ENCODE measurements at regions of chr19 and their contacts with region 1.

Region 1: GRCh38 chr19:57240311-57241090 is at the start of gene ZNF805:
- DNase-seq: peak; percentile 94
- H3K4me3 ChIP-seq: peak within 1 kb of the TSS; percentile 61 to 79
- H3K27ac ChIP-seq: peak within 1 kb of the TSS; percentile 81 to 84
- H3K4me1 ChIP-seq: no peaks in the 10 kb centered on the region
- H3K27me3 ChIP-seq: no peaks in the 10 kb centered on the region
- CTCF ChIP-seq: peak in 3 of 4 experiments; percentile 20 to 41 (median 29)
- POLR2A ChIP-seq: peak; percentile 53
- total RNA-seq, gene ZNF805: 16.4 to 21.1 TPM

Region 2: DNA sequence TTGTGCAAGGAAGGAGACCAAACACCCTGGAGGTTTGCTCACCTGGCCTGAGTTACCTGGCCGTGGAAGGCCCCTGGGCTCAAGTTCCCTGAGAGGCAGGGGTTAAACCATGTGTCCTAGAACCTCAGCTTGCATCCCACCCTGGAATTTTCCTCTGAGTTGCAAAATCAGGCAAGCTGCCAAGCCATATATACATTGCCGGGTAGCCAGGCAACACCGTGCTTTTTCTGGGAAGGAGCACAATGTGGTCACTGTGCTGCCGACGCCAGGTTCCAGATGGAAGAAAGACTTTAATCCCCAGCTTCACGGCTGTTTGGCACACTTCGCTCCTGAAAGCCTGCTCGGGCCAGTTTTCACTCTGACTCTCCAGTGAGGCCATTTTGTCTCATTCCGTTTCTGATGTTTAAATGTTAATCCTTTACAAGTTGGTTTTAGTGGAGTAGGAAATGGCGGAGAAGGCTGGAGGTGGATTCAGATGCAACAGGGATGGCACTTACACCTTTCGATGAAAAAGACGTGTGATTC is 339.9 kb before region 1 on chr19:
- intact Hi-C with region 1: no loop called
- DNase-seq: no peak
- H3K4me3 ChIP-seq: no peak overlapping the region
- H3K27ac ChIP-seq: no peak overlapping the region
- H3K4me1 ChIP-seq: no peaks in the 10 kb centered on the region
- H3K27me3 ChIP-seq: no peaks in the 10 kb centered on the region
- CTCF ChIP-seq: no peak
- POLR2A ChIP-seq: no peak

Region 3: GRCh38 chr19:57279418-57280066 is 39.0 kb after region 1 on chr19:
- intact Hi-C with region 1: loop called (anchors 1 kb)
- DNase-seq: peak; percentile 88
- H3K4me3 ChIP-seq: peak overlapping the region; percentile 70 to 99
- H3K27ac ChIP-seq: peak overlapping the region; percentile 98 to 99
- H3K4me1 ChIP-seq: peaks cover 5% of the 10 kb centered on the region
- H3K27me3 ChIP-seq: no peaks in the 10 kb centered on the region
- CTCF ChIP-seq: peak in 2 of 4 experiments; percentile 9 to 34
- POLR2A ChIP-seq: peak; percentile 40